PC-9 (cell line): ENCODE measurements at regions of chr12 and their contacts with region 1.

Region 1: GRCh38 chr12:49264738-49265515 is at the start of gene TUBA1C:
- DNase-seq: peak; percentile 82 to 96
- H3K4me3 ChIP-seq: peak within 1 kb of the TSS; percentile 94
- H3K27ac ChIP-seq: peak within 1 kb of the TSS; percentile 98
- H3K4me1 ChIP-seq: peaks cover 50% of the 10 kb centered on the region
- H3K27me3 ChIP-seq: no peaks in the 10 kb centered on the region
- CTCF ChIP-seq: 0 out of 2 replicates have a peak, but pooled peaks have one; percentile 18
- total RNA-seq, gene TUBA1C: 449 and 490 TPM in 2 replicates

Region 2: DNA sequence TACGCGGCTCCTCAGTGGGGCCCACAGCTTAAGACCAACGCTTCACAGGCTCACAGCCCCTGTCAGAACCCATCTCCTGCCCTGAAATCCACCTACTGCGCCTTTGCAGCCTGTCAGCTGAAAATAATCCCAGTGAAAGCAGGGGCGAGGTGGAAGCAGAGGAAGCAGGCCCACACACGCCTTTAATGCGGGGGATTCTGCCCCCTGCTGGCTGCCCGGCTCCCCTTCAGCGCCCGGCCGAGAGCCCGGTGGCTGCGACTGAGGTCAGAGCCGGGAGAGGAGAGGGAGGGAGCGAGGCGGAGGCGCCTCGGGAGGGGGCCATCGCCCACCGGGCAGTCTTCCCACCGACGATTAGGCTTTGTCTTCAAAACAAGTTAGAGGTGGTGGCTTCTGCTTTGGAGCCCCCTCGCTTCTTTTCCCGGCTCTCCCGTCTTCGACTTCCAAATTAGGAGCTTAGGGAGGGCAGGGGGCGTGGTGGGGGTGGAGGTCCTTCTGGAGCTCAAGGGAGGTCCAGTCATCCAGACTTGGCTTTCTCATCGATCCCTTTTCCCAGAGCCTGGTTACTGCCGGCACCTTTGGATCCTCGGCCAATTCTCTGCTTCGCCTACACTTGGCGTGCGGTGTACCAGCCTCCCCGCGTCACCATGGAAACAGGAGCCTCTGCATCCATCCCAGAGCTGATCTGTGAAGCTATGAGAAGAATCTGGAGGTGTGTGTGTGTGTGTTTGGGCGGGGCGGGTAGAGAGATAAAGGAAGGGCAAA is 374.1 kb before region 1 on chr12:
- CTCF ChIA-PET with region 1: no interaction called
- POLR2A ChIA-PET with region 1: interaction called, 27 read pairs
- intact Hi-C with region 1: no loop called
- DNase-seq: peak; percentile 41 to 78
- H3K4me3 ChIP-seq: no peak overlapping the region
- H3K27ac ChIP-seq: no peak overlapping the region
- H3K4me1 ChIP-seq: no peaks in the 10 kb centered on the region
- H3K27me3 ChIP-seq: peaks cover 7% of the 10 kb centered on the region; the same call in 1 of the 2 replicates
- CTCF ChIP-seq: peak; percentile 90

Region 3: GRCh38 chr12:49130151-49131050 is 134.5 kb before region 1 on chr12:
- CTCF ChIA-PET with region 1: interaction called, 3 read pairs
- POLR2A ChIA-PET with region 1: interaction called, 27 read pairs
- intact Hi-C with region 1: no loop called
- DNase-seq: peak; percentile 83 to 89
- H3K4me3 ChIP-seq: peak overlapping the region; percentile 84
- H3K27ac ChIP-seq: peak overlapping the region; percentile 94
- H3K4me1 ChIP-seq: peaks cover 26% of the 10 kb centered on the region
- H3K27me3 ChIP-seq: no peaks in the 10 kb centered on the region
- CTCF ChIP-seq: peak; percentile 82

Region 4: GRCh38 chr12:49244176-49244575 is 20.8 kb before region 1 on chr12:
- CTCF ChIA-PET with region 1: no interaction called
- POLR2A ChIA-PET with region 1: interaction called, 18 read pairs
- intact Hi-C with region 1: no loop called
- DNase-seq: no peak
- H3K4me3 ChIP-seq: no peak overlapping the region
- H3K27ac ChIP-seq: no peak overlapping the region
- H3K4me1 ChIP-seq: no peaks in the 10 kb centered on the region
- H3K27me3 ChIP-seq: no peaks in the 10 kb centered on the region
- CTCF ChIP-seq: no peak

Region 5: GRCh38 chr12:49331380-49332222 is 66.7 kb after region 1 on chr12:
- CTCF ChIA-PET with region 1: no interaction called
- POLR2A ChIA-PET with region 1: interaction called, 11 read pairs
- intact Hi-C with region 1: no loop called
- DNase-seq: peak in 1 of 2 experiments; percentile 47
- H3K4me3 ChIP-seq: no peak overlapping the region
- H3K27ac ChIP-seq: no peak overlapping the region
- H3K4me1 ChIP-seq: no peaks in the 10 kb centered on the region
- H3K27me3 ChIP-seq: no peaks in the 10 kb centered on the region
- CTCF ChIP-seq: peak; percentile 76

Region 6: DNA sequence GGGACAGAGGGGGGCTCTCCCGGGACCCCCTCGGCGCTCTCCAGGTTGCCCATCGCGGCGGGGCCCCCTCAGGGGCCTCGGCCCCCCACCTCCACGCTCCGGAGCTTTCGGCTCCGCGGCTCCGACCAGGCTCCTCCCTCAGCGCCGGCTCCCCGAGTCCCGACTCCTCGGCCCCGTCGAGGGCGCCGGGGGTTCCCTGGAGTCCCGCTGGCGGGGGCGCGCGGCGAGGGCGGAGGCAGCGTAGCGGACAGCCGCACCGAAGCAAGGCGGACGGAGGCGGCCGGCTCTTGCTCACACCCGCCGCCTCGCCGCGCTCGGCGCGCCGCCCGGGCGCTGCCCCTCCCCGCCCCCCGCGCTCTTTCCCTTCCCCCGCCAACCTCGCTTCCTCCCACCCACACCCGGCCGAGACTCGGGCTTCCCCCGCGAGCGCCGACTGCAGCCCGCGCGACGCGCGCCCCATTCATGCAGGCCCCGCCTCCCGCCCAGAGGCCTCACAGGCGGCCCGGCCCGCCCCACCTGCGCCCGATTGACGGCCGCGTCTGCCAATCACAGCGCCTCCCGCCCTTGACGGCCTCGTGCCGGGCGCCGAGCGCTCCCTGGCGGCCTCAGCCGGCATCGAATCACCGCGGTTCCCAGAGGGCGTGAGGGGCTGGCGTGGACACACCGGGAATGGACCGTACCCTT is 442.3 kb after region 1 on chr12 and contains the start of gene FMNL3:
- CTCF ChIA-PET with region 1: no interaction called
- POLR2A ChIA-PET with region 1: interaction called, 10 read pairs
- intact Hi-C with region 1: no loop called
- DNase-seq: peak; percentile 71 to 96
- H3K4me3 ChIP-seq: peak within 1 kb of the TSS; percentile 65
- H3K27ac ChIP-seq: no peak within 1 kb of the TSS
- H3K4me1 ChIP-seq: no peaks in the 10 kb centered on the region
- H3K27me3 ChIP-seq: peaks cover 36% of the 10 kb centered on the region
- CTCF ChIP-seq: peak; percentile 89
- total RNA-seq, gene FMNL3: 5.6 and 6.5 TPM in 2 replicates